IMR-90 (cell line): ENCODE measurements at regions of chr10 and their contacts with region 1.

Region 1: GRCh38 chr10:63157845-63158624 is 24.9 kb downstream of the NRBF2 start:
- DNase-seq: peak; percentile 95
- ATAC-seq: peak; percentile 77
- H3K4me3 ChIP-seq: no peak overlapping the region
- H3K27ac ChIP-seq: no peak overlapping the region
- H3K4me1 ChIP-seq: peaks cover 2% of the 10 kb centered on the region; the same call in 1 of the 2 replicates
- H3K27me3 ChIP-seq: no peaks in the 10 kb centered on the region
- CTCF ChIP-seq: peak; percentile 78
- POLR2A ChIP-seq: no peak
- RAD21 ChIP-seq: peak; percentile 92

Region 2: DNA sequence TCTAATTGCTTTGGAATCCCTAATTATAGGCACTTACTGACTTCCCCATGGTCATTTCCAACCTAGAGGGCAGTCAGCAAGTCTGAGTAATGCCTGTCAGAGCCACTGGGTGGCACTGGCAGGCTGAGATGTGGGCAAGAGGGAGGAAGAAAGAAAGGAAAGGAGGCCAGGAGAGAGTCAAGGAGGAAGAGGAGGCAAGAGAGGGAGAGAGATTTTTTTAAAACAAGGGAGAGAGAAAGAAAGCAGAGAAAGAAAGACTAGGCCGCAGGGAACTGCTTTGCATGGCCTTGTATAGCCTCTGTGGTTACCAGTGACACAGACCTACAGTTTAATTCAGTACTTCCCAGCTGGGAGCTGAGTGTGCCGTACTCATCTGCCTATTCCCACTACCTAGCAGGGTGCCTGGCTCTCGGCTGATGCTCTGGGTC is 563.9 kb before region 1 on chr10:
- CTCF ChIA-PET with region 1: interaction called, 8 read pairs
- POLR2A ChIA-PET with region 1: no interaction called
- dilution Hi-C with region 1: no loop called
- in situ Hi-C with region 1: no loop called
- intact Hi-C with region 1: loop called (anchors 1 kb)
- DNase-seq: peak; percentile 56
- ATAC-seq: peak; percentile 96
- H3K4me3 ChIP-seq: no peak overlapping the region
- H3K27ac ChIP-seq: no peak overlapping the region
- H3K4me1 ChIP-seq: no peaks in the 10 kb centered on the region
- H3K27me3 ChIP-seq: no peaks in the 10 kb centered on the region
- CTCF ChIP-seq: peak; percentile 93
- POLR2A ChIP-seq: no peak
- RAD21 ChIP-seq: peak; percentile 93

Region 3: GRCh38 chr10:62748386-62748785 is 409.6 kb before region 1 on chr10:
- CTCF ChIA-PET with region 1: no interaction called
- POLR2A ChIA-PET with region 1: no interaction called
- dilution Hi-C with region 1: no loop called
- in situ Hi-C with region 1: no loop called
- intact Hi-C with region 1: no loop called
- DNase-seq: no peak
- ATAC-seq: no peak
- H3K4me3 ChIP-seq: no peak overlapping the region
- H3K27ac ChIP-seq: no peak overlapping the region
- H3K4me1 ChIP-seq: no peaks in the 10 kb centered on the region; the same call in 1 of the 2 replicates
- H3K27me3 ChIP-seq: peaks cover 5% of the 10 kb centered on the region
- CTCF ChIP-seq: no peak
- POLR2A ChIP-seq: no peak
- RAD21 ChIP-seq: no peak

Region 4: DNA sequence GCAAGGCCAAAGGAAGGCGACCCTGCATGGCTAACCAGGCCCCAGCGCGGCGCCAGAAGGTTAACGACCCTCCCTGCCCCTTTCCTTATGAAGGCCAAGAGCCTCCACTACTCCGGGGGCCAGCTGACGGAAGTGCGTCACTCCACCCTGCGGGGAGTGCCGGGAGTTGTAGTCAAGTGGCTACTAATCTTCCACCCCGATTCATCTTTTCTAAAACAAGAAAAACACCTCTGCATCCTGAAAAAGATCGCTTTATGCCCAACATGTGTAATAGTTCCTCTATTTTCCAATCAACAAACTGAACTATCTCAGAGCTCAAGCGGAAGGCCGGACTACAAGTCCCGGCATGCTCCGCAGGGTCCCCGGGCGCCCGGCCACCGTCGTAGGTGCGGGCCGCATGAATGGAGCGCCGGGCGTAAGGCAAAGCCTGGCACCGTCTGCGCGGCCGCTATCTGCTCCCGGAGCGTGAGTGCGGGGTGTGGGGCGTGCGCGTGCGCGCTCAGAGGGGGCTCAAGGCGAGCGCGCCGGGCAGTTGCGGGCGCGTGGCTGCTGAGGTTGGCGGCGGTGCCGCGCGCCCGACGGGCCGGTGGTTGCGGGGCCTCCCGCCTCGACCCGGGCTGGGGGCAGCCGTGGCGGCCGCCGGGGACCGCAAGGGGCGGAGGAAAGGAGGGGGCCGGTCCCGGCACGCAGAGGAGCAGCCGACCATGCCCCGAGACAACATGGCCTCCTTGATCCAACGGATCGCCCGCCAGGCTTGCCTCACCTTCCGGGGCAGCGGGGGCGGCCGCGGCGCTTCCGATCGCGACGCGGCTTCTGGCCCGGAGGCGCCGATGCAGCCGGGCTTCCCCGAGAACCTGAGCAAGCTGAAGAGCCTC is 353.4 kb before region 1 on chr10 and contains the start of gene ADO:
- CTCF ChIA-PET with region 1: no interaction called
- POLR2A ChIA-PET with region 1: no interaction called
- dilution Hi-C with region 1: no loop called
- in situ Hi-C with region 1: no loop called
- intact Hi-C with region 1: loop called (anchors 5 kb)
- DNase-seq: peak; percentile 79
- ATAC-seq: peak; percentile 91
- H3K4me3 ChIP-seq: peak within 1 kb of the TSS; percentile 94
- H3K27ac ChIP-seq: peak within 1 kb of the TSS; percentile 99
- H3K4me1 ChIP-seq: peaks cover 8% of the 10 kb centered on the region; the same call in 1 of the 2 replicates
- H3K27me3 ChIP-seq: no peaks in the 10 kb centered on the region; the same call in 1 of the 2 replicates
- CTCF ChIP-seq: no peak
- POLR2A ChIP-seq: peak; percentile 62
- RAD21 ChIP-seq: no peak
- total RNA-seq, gene ADO: 8.1 and 11.4 TPM in 2 replicates

Region 5: GRCh38 chr10:62934258-62934657 is 223.8 kb before region 1 on chr10:
- CTCF ChIA-PET with region 1: no interaction called
- POLR2A ChIA-PET with region 1: no interaction called
- dilution Hi-C with region 1: no loop called
- in situ Hi-C with region 1: no loop called
- intact Hi-C with region 1: no loop called
- DNase-seq: no peak
- ATAC-seq: no peak
- H3K4me3 ChIP-seq: no peak overlapping the region
- H3K27ac ChIP-seq: no peak overlapping the region
- H3K4me1 ChIP-seq: no peaks in the 10 kb centered on the region
- H3K27me3 ChIP-seq: no peaks in the 10 kb centered on the region; the same call in 1 of the 2 replicates
- CTCF ChIP-seq: no peak
- POLR2A ChIP-seq: no peak
- RAD21 ChIP-seq: no peak

Region 6: DNA sequence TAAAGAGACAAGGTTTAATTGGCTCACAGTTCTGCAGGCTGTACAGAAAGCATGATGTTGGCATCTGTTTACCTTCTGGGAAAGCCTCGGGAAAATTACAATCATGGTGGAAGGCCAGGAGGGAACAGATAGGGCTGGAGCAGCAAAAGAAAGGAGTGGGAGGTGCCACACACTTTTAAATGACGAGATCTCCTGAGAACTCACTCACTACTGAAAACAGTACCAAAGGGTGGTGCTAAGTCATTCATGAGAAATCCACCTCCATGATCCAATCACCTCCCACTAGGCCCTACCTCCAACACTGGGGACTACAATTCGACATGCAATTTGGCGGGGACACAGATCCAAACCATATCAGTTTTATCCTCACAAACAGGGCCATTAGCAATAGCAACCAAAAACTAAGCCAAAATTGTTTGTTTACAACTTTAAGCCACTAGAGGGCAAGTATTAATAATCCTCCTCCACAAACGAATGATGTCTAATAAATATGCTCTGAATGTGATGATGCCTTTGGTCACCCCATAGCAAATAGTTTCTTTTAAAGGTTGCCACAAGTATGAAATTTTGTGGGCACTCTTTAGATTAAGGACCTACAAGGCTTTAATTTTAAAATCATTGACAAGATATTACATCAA is 154.1 kb before region 1 on chr10:
- CTCF ChIA-PET with region 1: no interaction called
- POLR2A ChIA-PET with region 1: no interaction called
- dilution Hi-C with region 1: no loop called
- in situ Hi-C with region 1: no loop called
- intact Hi-C with region 1: loop called (anchors 2 kb)
- DNase-seq: no peak
- ATAC-seq: no peak
- H3K4me3 ChIP-seq: no peak overlapping the region
- H3K27ac ChIP-seq: no peak overlapping the region
- H3K4me1 ChIP-seq: no peaks in the 10 kb centered on the region
- H3K27me3 ChIP-seq: peaks cover 3% of the 10 kb centered on the region; the same call in 1 of the 2 replicates
- CTCF ChIP-seq: 0 out of 2 replicates have a peak, but pooled peaks have one; percentile 11
- POLR2A ChIP-seq: no peak
- RAD21 ChIP-seq: no peak

Region 7: DNA sequence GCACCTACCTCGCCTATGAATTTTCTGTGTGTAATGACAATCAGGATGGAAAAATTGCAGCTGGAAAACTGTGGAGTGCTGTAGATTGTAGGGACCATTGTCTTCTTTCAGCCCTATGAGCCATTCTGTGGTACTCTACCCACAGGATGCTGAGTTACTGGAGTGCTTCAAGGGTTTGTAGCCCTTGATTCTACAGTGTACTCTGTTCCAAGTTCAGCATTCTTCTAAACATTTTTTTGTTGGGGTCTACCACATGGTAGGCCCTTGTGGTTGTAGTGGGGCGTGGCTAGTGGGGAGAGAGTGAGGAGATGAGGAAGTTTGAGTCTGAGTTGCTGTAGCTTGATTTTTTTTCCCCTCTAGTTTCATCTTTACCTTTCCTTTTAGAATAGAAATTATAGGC is 396.6 kb after region 1 on chr10:
- CTCF ChIA-PET with region 1: no interaction called
- POLR2A ChIA-PET with region 1: no interaction called
- dilution Hi-C with region 1: no loop called
- in situ Hi-C with region 1: no loop called
- intact Hi-C with region 1: no loop called
- DNase-seq: peak; percentile 91
- ATAC-seq: peak; percentile 85
- H3K4me3 ChIP-seq: no peak overlapping the region
- H3K27ac ChIP-seq: peak overlapping the region; percentile 73
- H3K4me1 ChIP-seq: peaks cover 9% of the 10 kb centered on the region
- H3K27me3 ChIP-seq: no peaks in the 10 kb centered on the region
- CTCF ChIP-seq: no peak
- POLR2A ChIP-seq: no peak
- RAD21 ChIP-seq: no peak

Region 8: DNA sequence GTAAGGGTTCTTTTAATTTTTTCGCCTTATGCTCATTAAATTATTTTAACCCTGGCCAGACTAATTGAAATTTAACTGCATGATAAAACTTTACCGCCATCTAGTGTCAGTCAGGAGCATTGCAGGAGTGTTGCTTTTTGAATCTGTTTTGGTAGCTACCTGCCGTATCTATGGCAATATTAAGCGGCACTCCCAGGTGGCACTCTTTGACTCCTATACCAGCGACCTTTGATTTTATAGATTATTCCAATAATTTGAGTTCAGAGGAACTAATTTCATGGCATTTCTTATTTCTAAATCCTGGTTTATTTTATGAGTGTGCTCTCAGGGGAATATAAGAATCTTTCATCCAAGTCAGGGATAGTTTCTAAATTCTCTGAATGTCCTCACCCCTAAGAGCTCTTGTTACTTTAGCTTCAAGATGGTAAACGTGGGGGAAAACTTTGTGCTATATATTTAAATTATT is 562.1 kb after region 1 on chr10:
- CTCF ChIA-PET with region 1: interaction called, 10 read pairs
- POLR2A ChIA-PET with region 1: no interaction called
- dilution Hi-C with region 1: loop called (anchors 25 kb)
- in situ Hi-C with region 1: no loop called
- intact Hi-C with region 1: no loop called
- DNase-seq: peak; percentile 45
- ATAC-seq: peak; percentile 69
- H3K4me3 ChIP-seq: no peak overlapping the region
- H3K27ac ChIP-seq: no peak overlapping the region
- H3K4me1 ChIP-seq: no peaks in the 10 kb centered on the region
- H3K27me3 ChIP-seq: peaks cover 7% of the 10 kb centered on the region
- CTCF ChIP-seq: peak; percentile 96
- POLR2A ChIP-seq: no peak
- RAD21 ChIP-seq: peak; percentile 93